ENCODE measurements at regions of chr11 and their contacts with region 1.

Region 1: DNA sequence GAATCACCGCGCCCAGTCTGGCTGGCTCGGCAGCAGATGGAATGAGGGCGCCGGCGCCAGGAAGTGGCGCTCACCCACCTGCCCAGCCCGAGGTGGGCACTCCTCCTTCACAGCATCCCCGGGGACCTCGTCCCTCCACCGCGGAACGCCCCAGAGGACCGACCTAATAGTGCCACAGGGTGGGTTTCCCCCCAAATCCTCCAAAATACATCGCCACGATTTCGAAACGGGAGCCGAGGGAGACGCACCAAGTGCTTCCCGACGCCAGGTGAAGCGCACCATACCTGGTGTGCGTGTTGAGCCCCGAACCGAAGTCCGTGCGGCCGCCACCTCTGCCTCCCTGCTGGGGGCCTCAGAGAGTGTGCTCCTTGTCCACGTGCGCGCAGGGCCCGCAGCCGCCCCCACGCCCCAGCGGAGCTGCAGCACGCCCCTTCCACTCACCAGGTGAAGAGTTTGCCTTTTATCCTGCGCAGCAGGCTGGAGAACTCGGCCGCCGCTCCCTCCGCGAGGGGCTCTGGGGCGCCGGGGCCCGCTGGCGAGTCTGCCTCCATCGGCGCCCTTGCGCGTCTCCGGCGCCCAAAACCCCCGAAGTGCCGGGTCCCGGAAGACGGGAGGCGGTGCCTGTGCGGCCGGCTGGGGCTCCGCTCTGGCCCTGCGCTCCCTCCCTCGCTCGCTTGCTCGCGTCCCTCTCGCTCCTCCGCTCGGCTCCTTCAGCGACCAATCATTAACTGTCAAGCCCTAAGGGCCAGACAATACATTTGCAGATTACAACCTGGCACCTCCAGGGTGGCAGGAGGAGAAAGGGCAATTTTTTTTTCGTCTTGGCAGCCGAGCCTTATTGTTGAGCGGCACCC is at the start of gene SLC35F2:
- DNase-seq: no peak
- H3K4me3 ChIP-seq: peak within 1 kb of the TSS; percentile 66 to 80 (median 74)
- H3K27ac ChIP-seq: peak within 1 kb of the TSS; percentile 24 to 71 (median 66)
- H3K4me1 ChIP-seq: peaks cover 5 to 28% (median 26%) of the 10 kb centered on the region in 4 donors
- H3K27me3 ChIP-seq: no peaks in the 10 kb centered on the region
- CTCF ChIP-seq: no peak
- EP300 ChIP-seq: no peak
- POLR2A ChIP-seq: no peak
- total RNA-seq, gene SLC35F2: 2.1 to 4.1 (median 3.9) TPM

Region 2: GRCh38 chr11:107801641-107802040 is 56.8 kb before region 1 on chr11:
- intact Hi-C with region 1: loop called (anchors 5 kb)
- DNase-seq: no peak
- H3K4me3 ChIP-seq: no peak overlapping the region
- H3K27ac ChIP-seq: no peak overlapping the region
- H3K4me1 ChIP-seq: peaks cover 0 to 10% (median 6%) of the 10 kb centered on the region in 4 donors
- H3K27me3 ChIP-seq: no peaks in the 10 kb centered on the region
- CTCF ChIP-seq: no peak
- EP300 ChIP-seq: no peak
- POLR2A ChIP-seq: no peak

Region 3: GRCh38 chr11:107908306-107908705 is 49.9 kb after region 1 on chr11:
- intact Hi-C with region 1: no loop called
- DNase-seq: no peak
- H3K4me3 ChIP-seq: no peak overlapping the region
- H3K27ac ChIP-seq: no peak overlapping the region
- H3K4me1 ChIP-seq: no peaks in the 10 kb centered on the region
- H3K27me3 ChIP-seq: peaks cover 0 to 11% (median 0%) of the 10 kb centered on the region in 4 donors
- CTCF ChIP-seq: no peak
- EP300 ChIP-seq: no peak
- POLR2A ChIP-seq: no peak